ENCODE measurements at regions of chr5 and their contacts with region 1.

Region 1: DNA sequence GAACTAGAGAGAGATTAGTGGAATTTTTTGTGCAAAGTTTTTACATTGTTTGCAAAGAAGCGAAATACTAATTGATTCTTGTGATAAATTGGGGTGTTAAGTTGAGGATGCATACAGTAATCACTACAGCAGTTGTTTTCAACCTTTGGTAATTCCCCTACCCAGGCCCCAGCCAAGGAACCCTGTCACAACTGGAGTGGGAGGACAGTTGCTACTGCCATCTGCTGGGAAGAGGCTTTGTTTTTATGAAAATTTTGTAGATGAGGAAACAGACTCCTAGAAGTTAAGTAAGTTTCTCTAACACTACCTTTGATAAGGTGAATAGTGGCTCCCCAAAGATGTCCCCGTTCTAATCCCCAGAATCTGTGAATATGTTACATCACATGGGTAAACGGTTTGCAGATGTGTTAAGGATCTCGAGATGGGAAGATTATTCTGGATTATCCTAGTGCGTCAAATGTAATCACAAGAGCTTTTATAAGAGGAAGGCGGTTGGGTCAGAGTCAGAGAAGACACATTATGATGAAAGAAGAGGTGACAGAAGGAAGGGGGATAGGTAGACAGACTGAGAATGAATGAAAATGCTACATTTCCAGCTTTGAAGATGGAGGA is 34.0 kb upstream of the PPP1R2B start:
- DNase-seq: peak; percentile 81
- H3K4me3 Mint-ChIP-seq: no peak overlapping the region
- H3K27ac Mint-ChIP-seq: peak overlapping the region; percentile 14
- H3K4me1 Mint-ChIP-seq: peaks cover 3% of the 10 kb centered on the region
- H3K27me3 Mint-ChIP-seq: peaks cover 4% of the 10 kb centered on the region

Region 2: DNA sequence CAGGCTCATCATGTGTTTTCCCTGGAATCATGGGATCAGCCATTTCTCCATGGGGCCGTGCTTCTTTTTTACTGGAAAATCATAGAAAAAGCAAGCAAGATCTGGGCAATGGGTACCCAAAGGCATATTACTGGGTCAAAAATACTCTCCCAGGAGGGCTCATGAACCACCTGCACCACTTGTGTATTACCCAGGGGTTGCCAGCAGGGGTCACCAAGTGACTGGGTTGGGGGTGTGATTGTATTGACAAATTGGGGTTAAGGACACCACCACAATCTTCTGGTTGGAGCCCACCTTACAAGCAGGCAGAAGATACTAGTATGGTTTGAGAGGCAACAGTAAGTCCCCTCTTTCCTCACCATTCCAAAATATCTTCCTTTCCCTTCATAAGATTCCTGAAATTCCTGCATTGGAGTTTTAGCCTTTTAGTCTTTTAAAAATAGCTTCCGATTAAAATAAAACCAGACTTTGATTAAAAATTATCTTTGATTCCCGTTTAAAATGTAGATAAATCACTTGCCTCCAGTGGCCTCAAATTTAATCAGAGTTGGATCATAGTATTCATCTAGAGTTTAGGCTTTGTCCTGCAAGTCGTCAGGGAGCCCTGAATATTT is 1199.2 kb before region 1 on chr5:
- intact Hi-C with region 1: loop called (anchors 10 kb)
- DNase-seq: peak; percentile 84
- H3K4me3 Mint-ChIP-seq: no peak overlapping the region
- H3K27ac Mint-ChIP-seq: no peak overlapping the region
- H3K4me1 Mint-ChIP-seq: no peaks in the 10 kb centered on the region
- H3K27me3 Mint-ChIP-seq: peaks cover 11% of the 10 kb centered on the region

Region 3: DNA sequence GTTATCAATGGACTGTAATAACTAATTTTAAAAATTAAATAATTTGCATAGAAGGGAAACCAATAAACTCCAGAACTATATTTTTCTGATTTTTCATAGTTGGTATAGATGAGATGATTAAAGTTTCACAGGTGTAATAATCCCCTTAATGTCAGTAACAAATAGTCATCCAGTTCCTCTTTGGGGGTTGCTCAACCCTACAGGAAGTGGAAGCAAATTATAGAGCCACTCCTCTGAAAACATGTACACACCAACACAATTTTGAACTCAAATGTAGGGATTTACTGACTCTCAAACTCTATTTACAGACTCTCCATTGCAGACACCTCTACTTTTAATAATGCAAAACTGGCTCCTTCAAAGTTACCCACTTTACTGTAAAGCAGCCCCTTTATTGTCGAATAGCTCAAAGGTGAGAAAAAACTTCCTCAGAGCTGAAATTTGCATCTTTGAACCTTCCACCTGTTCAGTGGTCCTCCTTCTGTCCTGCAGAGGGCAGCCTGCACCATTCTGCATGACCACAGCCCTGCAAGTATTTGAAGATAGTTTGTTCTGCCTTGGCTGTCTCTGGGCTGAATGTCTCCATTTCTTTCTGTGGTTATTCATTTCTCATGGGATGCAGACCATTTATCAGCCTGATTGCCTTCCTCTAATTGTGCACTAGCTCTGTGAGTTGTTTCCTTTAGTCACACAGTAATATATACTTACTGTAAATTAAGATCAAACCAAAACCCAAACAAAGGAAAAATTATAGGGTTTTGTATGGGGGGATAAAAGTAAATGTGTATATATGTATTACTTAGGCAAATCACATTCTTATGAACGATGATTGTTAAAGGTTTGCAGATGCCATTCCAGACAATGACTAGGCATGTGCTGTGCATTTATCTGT is 872.3 kb before region 1 on chr5:
- intact Hi-C with region 1: loop called (anchors 10 kb)
- DNase-seq: peak; percentile 77
- H3K4me3 Mint-ChIP-seq: no peak overlapping the region
- H3K27ac Mint-ChIP-seq: no peak overlapping the region
- H3K4me1 Mint-ChIP-seq: peaks cover 4% of the 10 kb centered on the region
- H3K27me3 Mint-ChIP-seq: peaks cover 11% of the 10 kb centered on the region